AG04450 (cell line): ENCODE measurements at regions of chr1 and their contacts with region 1.

Region 1: GRCh38 chr1:150922519-150922975 is 3.6 kb upstream of the SETDB1 start:
- DNase-seq: peak; percentile 76
- H3K4me3 ChIP-seq: no peak overlapping the region
- H3K27ac ChIP-seq: no peak overlapping the region
- H3K27me3 ChIP-seq: no peaks in the 10 kb centered on the region
- CTCF ChIP-seq: peak; percentile 84

Region 2: GRCh38 chr1:150813058-150813707 is 109.4 kb before region 1 on chr1:
- CTCF ChIA-PET with region 1: interaction called, 10 read pairs
- POLR2A ChIA-PET with region 1: no interaction called
- DNase-seq: peak; percentile 57
- H3K4me3 ChIP-seq: no peak overlapping the region
- H3K27ac ChIP-seq: no peak overlapping the region
- H3K27me3 ChIP-seq: no peaks in the 10 kb centered on the region
- CTCF ChIP-seq: peak; percentile 93

Region 3: DNA sequence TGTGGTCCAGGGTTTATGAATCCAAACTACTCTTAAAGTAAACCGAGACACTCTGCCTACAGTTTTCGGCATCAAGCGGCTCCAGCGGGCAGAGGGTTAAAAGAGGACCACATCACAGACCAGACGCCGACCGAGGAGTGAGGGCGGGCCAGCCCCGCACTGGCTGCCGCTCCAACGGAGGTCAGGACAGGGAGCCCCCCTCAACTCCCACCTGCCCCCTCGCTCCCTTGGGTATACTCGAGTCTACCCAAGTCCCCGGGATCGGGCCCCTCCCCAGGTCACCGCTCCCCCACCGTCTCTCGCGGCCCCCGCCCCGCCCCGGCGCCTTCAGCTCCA is 46.5 kb before region 1 on chr1:
- CTCF ChIA-PET with region 1: interaction called, 18 read pairs
- POLR2A ChIA-PET with region 1: no interaction called
- DNase-seq: peak; percentile 32
- H3K4me3 ChIP-seq: peak overlapping the region; percentile 85
- H3K27ac ChIP-seq: peak overlapping the region; percentile 83
- H3K27me3 ChIP-seq: no peaks in the 10 kb centered on the region
- CTCF ChIP-seq: no peak

Region 4: GRCh38 chr1:150887018-150887417 is 35.5 kb before region 1 on chr1 and contains the start of gene CTXND2:
- CTCF ChIA-PET with region 1: interaction called, 18 read pairs
- POLR2A ChIA-PET with region 1: no interaction called
- DNase-seq: no peak
- H3K4me3 ChIP-seq: no peak within 1 kb of the TSS
- H3K27ac ChIP-seq: no peak within 1 kb of the TSS
- H3K27me3 ChIP-seq: no peaks in the 10 kb centered on the region
- CTCF ChIP-seq: no peak
- polyA plus RNA-seq, gene CTXND2: not detected in 2 replicates

Region 5: DNA sequence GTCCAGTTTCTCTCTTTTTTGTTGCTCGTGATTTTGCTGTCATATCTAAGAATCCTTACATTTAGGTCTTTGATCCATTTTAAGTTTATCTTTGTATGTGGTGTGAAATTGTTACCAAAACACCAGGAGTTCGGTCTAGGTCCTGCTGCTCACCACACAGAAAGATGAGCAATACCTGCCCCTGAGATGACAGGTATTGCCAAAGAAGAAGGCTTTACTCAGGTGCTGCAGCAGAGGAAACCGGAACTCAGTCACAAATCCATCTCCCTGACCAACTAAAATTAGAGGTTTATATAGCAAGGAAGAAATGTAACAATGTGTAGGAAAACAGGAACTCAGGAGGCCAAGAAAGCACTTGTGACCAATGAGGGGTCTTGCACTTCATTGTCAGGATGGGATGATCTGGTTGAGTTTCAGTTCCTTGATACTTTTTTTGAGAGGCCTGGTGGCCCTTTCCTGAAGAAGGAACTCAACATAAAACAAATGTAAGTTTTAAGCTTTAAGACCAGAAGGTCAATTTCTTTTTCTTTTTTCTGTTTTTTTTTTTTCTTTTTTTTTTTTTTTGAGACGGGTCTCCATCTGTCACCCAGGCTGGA is 12.9 kb before region 1 on chr1:
- CTCF ChIA-PET with region 1: interaction called, 21 read pairs
- POLR2A ChIA-PET with region 1: no interaction called
- DNase-seq: no peak
- H3K4me3 ChIP-seq: no peak overlapping the region
- H3K27ac ChIP-seq: no peak overlapping the region
- H3K27me3 ChIP-seq: peaks cover 2% of the 10 kb centered on the region
- CTCF ChIP-seq: no peak

Region 6: GRCh38 chr1:150974580-150975478 is 52.3 kb after region 1 on chr1 and contains the start of gene CERS2:
- CTCF ChIA-PET with region 1: no interaction called
- POLR2A ChIA-PET with region 1: no interaction called
- DNase-seq: no peak
- H3K4me3 ChIP-seq: peak within 1 kb of the TSS; percentile 81
- H3K27ac ChIP-seq: peak within 1 kb of the TSS; percentile 70
- H3K27me3 ChIP-seq: no peaks in the 10 kb centered on the region
- CTCF ChIP-seq: no peak
- polyA plus RNA-seq, gene CERS2: 193 and 217 TPM in 2 replicates

Region 7: GRCh38 chr1:150987924-150988323 is 65.4 kb after region 1 on chr1:
- CTCF ChIA-PET with region 1: no interaction called
- POLR2A ChIA-PET with region 1: no interaction called
- DNase-seq: no peak
- H3K4me3 ChIP-seq: no peak overlapping the region
- H3K27ac ChIP-seq: no peak overlapping the region
- H3K27me3 ChIP-seq: no peaks in the 10 kb centered on the region
- CTCF ChIP-seq: no peak